CD4-positive, alpha-beta T cell (primary cell): ENCODE measurements at regions of chr6 and their contacts with region 1.

Region 1: DNA sequence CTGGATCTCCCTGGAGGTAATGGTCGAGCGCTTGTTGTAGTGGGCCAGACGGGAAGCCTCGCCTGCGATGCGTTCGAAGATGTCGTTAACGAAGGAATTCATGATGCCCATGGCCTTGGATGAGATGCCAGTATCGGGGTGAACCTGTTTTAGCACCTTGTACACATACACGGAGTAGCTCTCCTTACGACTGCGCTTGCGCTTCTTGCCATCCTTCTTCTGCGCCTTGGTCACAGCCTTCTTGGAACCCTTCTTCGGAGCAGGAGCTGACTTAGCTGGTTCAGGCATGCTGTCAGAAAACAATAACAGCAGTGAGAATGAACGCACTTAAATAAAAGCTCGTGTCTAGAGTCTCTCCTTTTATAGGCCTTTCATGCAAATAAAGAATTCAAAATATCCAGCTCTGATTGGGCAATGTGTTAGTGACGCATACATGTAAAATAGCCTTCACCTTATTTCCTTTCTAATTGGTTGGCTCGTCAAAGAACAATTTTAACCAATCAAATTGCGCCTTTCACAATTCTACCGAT is 129.2 kb downstream of the HFE start:
- DNase-seq: peak; percentile 52 to 98 (median 71)
- ATAC-seq: peak; percentile 80
- H3K4me3 ChIP-seq: peak overlapping the region; percentile 76
- H3K4me3 Mint-ChIP-seq: no peak overlapping the region
- H3K27ac ChIP-seq: peak overlapping the region; percentile 87 to 88
- H3K27ac Mint-ChIP-seq: no peak overlapping the region
- H3K4me1 ChIP-seq: peaks cover 33% of the 10 kb centered on the region
- H3K4me1 Mint-ChIP-seq: no peaks in the 10 kb centered on the region
- H3K27me3 ChIP-seq: no peaks in the 10 kb centered on the region
- H3K27me3 Mint-ChIP-seq: no peaks in the 10 kb centered on the region
- CTCF ChIP-seq: no peak

Region 2: DNA sequence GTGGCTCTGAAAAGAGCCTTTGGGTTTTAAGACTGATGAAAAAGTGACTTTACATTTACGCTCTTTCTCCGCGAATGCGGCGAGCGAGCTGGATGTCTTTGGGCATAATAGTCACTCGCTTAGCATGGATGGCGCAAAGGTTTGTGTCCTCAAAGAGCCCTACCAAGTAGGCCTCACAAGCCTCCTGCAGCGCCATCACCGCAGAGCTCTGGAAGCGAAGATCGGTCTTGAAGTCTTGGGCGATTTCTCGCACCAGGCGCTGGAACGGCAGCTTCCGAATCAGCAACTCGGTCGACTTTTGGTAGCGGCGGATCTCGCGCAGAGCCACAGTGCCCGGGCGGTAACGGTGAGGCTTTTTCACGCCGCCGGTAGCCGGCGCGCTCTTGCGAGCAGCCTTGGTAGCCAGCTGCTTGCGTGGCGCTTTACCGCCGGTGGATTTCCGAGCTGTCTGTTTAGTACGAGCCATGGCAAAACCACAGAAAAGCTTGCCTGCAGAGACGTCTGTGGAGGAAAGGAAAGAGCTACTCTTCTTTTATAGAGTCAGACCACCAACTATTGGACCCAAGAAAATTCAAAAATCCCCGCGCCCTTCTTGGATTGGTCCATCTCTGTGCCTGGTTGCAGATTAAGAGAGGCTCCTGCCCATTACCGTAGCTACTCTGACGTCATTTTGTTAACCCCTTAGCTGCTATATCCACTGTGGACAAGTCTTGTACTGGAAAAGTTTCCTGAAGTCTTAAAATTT is 184.7 kb before region 1 on chr6:
- CTCF ChIA-PET with region 1: no interaction called
- POLR2A ChIA-PET with region 1: interaction called, 44 read pairs
- intact Hi-C with region 1: no loop called
- DNase-seq: peak; percentile 73 to 94 (median 81)
- ATAC-seq: peak; percentile 65
- H3K4me3 ChIP-seq: peak overlapping the region; percentile 64
- H3K4me3 Mint-ChIP-seq: peak overlapping the region; percentile 97
- H3K27ac ChIP-seq: peak overlapping the region; percentile 42 to 72
- H3K27ac Mint-ChIP-seq: peak overlapping the region; percentile 99
- H3K4me1 ChIP-seq: peaks cover 35% of the 10 kb centered on the region
- H3K4me1 Mint-ChIP-seq: peaks cover 46% of the 10 kb centered on the region
- H3K27me3 ChIP-seq: no peaks in the 10 kb centered on the region
- H3K27me3 Mint-ChIP-seq: no peaks in the 10 kb centered on the region
- CTCF ChIP-seq: peak; percentile 22

Region 3: GRCh38 chr6:26156076-26156849 is 60.2 kb before region 1 on chr6:
- CTCF ChIA-PET with region 1: interaction called, 5 read pairs
- POLR2A ChIA-PET with region 1: interaction called, 438 read pairs
- intact Hi-C with region 1: loop called in 1 of 2 experiments (anchors 1 kb)
- DNase-seq: peak; percentile 76 to 94 (median 88)
- ATAC-seq: peak; percentile 33
- H3K4me3 ChIP-seq: peak overlapping the region; percentile 92
- H3K4me3 Mint-ChIP-seq: peak overlapping the region; percentile 99
- H3K27ac ChIP-seq: peak overlapping the region; percentile 67 to 91
- H3K27ac Mint-ChIP-seq: peak overlapping the region; percentile 97
- H3K4me1 ChIP-seq: peaks cover 37% of the 10 kb centered on the region
- H3K4me1 Mint-ChIP-seq: peaks cover 40% of the 10 kb centered on the region
- H3K27me3 ChIP-seq: no peaks in the 10 kb centered on the region
- H3K27me3 Mint-ChIP-seq: peaks cover 12% of the 10 kb centered on the region
- CTCF ChIP-seq: no peak

Region 4: DNA sequence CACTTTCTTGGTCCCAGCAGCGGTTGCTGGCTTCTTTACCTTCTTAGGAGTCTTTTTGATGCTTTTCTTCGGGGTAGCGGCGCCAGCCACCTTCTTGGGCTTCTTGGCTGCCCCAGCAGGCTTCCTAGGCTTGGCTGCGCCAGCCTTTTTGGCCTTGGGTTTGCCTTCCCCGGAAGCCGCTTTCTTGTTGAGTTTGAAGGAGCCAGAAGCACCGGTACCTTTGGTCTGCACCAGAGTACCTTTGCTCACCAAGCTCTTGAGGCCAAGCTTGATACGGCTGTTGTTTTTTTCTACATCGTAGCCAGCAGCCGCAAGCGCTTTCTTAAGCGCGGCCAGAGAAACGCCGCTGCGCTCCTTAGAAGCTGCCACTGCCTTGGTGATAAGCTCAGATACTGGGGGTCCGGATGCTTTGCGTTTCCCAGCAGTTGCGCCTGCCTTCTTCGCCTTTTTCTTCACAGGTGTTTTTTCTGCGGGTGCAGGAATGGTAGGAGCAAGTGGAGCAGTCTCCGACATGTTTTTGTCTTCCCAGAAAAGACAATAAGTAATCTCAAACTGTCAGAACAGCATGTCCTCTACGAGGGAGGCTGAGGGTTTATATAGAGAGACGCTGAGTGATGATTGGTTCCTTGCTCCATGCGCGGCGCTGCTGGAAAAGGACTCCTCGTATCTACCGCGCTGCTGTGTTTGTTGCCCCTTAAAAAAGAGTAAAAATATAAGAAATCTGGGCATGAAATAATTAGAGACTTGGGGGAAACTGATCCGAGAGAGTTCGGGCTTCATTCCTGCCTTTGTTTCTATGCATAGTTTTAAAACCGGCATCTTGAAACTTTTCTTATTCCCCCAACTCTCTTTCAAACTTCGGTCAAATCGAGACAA is 18.2 kb after region 1 on chr6:
- CTCF ChIA-PET with region 1: interaction called, 7 read pairs
- POLR2A ChIA-PET with region 1: interaction called, 754 read pairs
- intact Hi-C with region 1: loop called (anchors 1 to 2 kb)
- DNase-seq: peak; percentile 46 to 96 (median 67)
- ATAC-seq: peak; percentile 73
- H3K4me3 ChIP-seq: peak overlapping the region; percentile 66
- H3K4me3 Mint-ChIP-seq: peak overlapping the region; percentile 100
- H3K27ac ChIP-seq: peak overlapping the region; percentile 78 to 87
- H3K27ac Mint-ChIP-seq: peak overlapping the region; percentile 99
- H3K4me1 ChIP-seq: peaks cover 19% of the 10 kb centered on the region
- H3K4me1 Mint-ChIP-seq: peaks cover 42% of the 10 kb centered on the region
- H3K27me3 ChIP-seq: no peaks in the 10 kb centered on the region
- H3K27me3 Mint-ChIP-seq: peaks cover 8% of the 10 kb centered on the region
- CTCF ChIP-seq: no peak

Region 5: DNA sequence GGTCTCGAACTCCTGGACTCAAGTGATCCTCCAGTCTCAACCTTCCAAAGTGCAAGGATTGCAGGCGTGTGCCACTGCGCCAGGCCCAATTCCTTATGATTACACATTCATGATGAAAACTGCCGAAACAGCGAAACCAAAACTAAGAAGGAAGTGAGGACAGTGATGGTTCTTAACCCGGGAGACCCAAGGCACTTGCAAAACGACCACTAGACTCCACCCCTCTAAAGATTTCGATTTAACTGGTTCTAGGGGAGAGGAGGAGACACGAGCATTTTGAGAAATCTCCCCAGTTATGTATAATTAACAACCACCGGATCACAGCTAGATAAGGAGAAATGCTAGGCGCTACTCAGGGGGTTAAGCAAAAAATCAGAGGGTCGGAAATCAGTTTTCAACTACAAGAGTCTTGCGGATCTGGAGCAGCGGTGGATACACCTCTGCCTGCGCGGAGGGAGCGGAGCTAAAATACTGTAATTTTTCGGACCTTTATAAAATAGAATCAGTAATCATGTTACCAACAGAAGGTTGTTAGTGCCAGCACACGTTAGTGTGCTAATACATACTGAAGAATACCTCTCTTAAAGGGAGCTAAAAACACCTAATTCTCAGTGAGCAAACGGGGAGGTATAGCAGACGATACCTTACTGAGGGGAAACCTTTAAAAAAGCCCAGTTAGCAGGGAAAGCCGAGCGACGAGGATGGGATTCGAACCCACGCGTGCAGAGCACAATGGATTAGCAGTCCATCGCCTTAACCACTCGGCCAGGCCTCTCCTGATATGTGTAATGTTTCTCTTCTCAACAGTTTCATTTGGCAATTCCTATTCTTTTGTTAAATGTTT is 88.6 kb after region 1 on chr6:
- CTCF ChIA-PET with region 1: interaction called, 3 read pairs
- POLR2A ChIA-PET with region 1: interaction called, 19 read pairs
- intact Hi-C with region 1: no loop called
- DNase-seq: peak in 12 of 14 experiments; percentile 48 to 90 (median 62)
- ATAC-seq: peak; percentile 73
- H3K4me3 ChIP-seq: peak overlapping the region; percentile 60
- H3K4me3 Mint-ChIP-seq: peak overlapping the region; percentile 93
- H3K27ac ChIP-seq: peak overlapping the region in 1 of 2 donors; percentile 26
- H3K27ac Mint-ChIP-seq: peak overlapping the region; percentile 93
- H3K4me1 ChIP-seq: peaks cover 5% of the 10 kb centered on the region
- H3K4me1 Mint-ChIP-seq: peaks cover 33% of the 10 kb centered on the region
- H3K27me3 ChIP-seq: no peaks in the 10 kb centered on the region
- H3K27me3 Mint-ChIP-seq: peaks cover 12% of the 10 kb centered on the region
- CTCF ChIP-seq: no peak

Region 6: GRCh38 chr6:26553635-26554446 is 337.4 kb after region 1 on chr6:
- CTCF ChIA-PET with region 1: no interaction called
- POLR2A ChIA-PET with region 1: interaction called, 12 read pairs
- intact Hi-C with region 1: no loop called
- DNase-seq: peak; percentile 51 to 91 (median 64)
- ATAC-seq: peak; percentile 30
- H3K4me3 ChIP-seq: peak overlapping the region; percentile 60
- H3K4me3 Mint-ChIP-seq: no peak overlapping the region
- H3K27ac ChIP-seq: no peak overlapping the region
- H3K27ac Mint-ChIP-seq: no peak overlapping the region
- H3K4me1 ChIP-seq: peaks cover 33% of the 10 kb centered on the region
- H3K4me1 Mint-ChIP-seq: peaks cover 25% of the 10 kb centered on the region
- H3K27me3 ChIP-seq: no peaks in the 10 kb centered on the region
- H3K27me3 Mint-ChIP-seq: peaks cover 8% of the 10 kb centered on the region
- CTCF ChIP-seq: no peak

Region 7: DNA sequence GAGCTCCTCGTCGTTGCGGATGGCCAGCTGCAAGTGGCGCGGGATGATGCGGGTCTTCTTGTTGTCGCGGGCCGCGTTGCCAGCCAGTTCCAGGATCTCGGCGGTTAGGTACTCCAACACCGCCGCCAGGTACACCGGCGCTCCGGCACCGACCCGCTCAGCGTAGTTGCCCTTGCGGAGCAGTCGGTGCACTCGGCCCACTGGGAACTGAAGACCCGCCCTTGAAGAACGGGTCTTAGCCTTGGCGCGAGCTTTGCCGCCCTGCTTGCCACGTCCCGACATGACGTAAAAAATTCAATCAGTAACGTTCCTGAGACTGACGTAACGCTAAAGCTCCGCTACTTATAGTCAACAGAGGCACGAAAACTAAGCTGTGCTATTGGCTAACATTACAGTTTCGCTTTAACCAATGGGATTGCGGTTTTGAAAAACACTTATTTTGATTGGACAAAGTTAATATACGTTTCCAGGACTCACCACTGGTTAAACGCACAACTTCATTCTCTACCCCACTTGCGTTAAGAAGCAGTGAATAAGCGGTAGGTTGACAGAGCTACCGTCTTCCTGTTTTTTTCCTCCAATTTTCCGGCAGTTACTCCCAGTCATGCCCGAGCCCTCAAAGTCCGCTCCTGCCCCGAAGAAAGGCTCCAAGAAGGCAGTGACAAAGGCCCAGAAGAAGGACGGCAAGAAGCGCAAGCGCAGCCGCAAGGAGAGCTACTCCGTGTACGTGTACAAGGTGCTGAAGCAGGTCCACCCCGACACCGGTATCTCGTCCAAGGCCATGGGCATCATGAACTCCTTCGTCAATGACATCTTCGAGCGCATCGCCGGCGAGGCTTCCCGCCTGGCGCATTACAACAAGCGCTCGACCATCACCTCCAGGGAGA is 1621.9 kb after region 1 on chr6:
- CTCF ChIA-PET with region 1: no interaction called
- POLR2A ChIA-PET with region 1: interaction called, 40 read pairs
- intact Hi-C with region 1: no loop called
- DNase-seq: peak; percentile 52 to 98 (median 73)
- ATAC-seq: peak; percentile 73
- H3K4me3 ChIP-seq: peak overlapping the region; percentile 83
- H3K4me3 Mint-ChIP-seq: no peak overlapping the region
- H3K27ac ChIP-seq: peak overlapping the region; percentile 92 to 97
- H3K27ac Mint-ChIP-seq: no peak overlapping the region
- H3K4me1 ChIP-seq: peaks cover 32% of the 10 kb centered on the region
- H3K4me1 Mint-ChIP-seq: peaks cover 6% of the 10 kb centered on the region
- H3K27me3 ChIP-seq: peaks cover 0 to 6% of the 10 kb centered on the region in 2 experiments
- H3K27me3 Mint-ChIP-seq: peaks cover 12% of the 10 kb centered on the region
- CTCF ChIP-seq: no peak